ENCODE measurements at regions of chr1 and their contacts with region 1.

Region 1: DNA sequence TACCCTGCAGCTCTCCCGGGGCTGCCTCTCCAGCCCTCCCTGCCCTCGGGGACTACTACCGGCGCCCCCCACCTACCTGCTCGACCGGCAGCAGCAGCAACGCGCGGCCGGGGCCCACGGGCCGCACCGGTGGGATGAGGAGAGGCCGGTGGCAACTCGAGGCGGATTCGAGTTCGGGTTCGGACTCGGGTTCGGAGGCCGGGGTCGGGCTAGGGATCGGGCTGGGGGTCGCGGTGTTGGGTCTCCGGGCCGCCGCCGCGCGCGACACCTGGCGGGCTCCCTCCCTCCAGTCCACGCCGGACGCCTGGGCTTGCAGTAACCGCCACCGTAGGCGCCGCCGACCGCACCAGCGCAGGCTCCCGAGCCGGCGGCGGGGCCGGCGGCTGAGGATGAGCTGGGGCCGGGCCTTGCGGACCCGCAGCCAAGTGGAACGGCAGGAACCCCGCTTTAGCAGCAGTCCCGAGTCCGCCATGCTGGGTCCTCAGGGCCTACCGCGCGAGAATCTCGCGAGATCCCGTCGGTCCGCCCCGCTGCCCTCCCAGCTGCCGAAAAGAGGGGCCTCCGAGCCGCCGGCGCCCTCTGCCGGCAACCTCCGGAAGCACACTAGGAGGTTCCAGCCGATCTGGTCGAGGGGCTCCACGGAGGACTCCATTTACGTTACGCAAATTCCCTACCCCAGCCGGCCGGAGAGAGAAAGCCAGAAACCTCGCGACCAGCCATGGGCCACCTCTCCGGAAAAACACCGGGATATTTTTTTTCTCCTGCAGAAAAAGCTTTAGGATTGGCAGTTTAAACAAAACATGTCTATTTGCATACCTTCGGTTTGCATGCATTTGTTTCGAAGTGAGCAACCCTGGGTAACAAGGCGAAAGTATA is at the start of gene NOL9:
- DNase-seq: peak; percentile 95
- H3K27ac ChIP-seq: peak within 1 kb of the TSS; percentile 74
- CTCF ChIP-seq: peak; percentile 93

Region 2: DNA sequence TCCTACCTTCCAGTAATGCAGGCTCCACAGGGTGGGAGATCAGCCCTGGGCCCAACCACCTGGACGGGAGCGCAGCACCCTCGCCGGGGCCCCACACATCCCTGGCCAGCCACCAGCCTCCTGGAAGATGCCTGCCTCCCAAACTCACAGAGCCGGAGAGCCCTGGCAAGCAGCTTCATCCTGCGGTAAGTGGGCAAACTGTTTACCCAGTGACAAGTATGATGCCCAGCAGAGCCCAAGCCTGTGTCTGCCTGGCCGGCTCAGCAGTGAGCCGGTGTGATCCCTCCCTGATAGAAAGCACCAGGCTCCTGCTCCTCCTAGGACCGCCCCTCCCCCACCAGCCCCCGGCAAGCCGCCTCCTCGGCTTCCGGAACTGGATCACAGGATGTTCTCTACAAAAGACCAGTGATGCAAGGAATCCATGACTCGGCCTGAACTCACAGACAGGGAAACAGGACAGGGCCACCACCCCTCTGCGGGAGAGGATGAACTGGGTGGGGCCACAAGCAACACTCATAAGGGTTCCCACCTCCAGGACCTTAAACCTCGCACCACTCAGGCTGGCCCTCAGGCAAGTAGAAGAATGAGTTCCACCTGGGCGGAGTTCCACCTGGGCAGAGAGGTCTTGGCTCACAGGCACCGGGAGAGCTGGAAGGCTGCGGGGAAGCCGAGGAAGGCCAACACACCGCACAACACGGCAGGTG is 168.6 kb before region 1 on chr1:
- CTCF ChIA-PET with region 1: no interaction called
- POLR2A ChIA-PET with region 1: no interaction called
- DNase-seq: peak; percentile 97
- H3K27ac ChIP-seq: peak overlapping the region; percentile 99
- CTCF ChIP-seq: no peak

Region 3: DNA sequence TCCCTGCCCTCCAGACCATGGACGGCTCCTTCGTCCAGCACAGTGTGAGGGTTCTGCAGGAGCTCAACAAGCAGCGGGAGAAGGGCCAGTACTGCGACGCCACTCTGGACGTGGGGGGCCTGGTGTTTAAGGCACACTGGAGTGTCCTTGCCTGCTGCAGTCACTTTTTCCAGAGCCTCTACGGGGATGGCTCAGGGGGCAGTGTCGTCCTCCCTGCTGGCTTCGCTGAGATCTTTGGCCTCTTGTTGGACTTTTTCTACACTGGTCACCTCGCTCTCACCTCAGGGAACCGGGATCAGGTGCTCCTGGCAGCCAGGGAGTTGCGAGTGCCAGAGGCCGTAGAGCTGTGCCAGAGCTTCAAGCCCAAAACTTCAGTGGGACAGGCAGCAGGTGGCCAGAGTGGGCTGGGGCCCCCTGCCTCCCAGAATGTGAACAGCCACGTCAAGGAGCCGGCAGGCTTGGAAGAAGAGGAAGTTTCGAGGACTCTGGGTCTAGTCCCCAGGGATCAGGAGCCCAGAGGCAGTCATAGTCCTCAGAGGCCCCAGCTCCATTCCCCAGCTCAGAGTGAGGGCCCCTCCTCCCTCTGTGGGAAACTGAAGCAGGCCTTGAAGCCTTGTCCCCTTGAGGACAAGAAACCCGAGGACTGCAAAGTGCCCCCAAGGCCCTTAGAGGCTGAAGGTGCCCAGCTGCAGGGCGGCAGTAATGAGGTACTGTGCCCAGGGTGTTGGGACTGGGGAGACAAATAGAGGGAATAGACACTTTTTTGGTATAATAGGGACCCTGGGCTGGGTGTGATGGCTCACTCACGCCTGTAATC is 26.5 kb after region 1 on chr1:
- CTCF ChIA-PET with region 1: interaction called, 10 read pairs
- POLR2A ChIA-PET with region 1: interaction called, 3 read pairs
- DNase-seq: no peak
- H3K27ac ChIP-seq: peak overlapping the region; percentile 92
- CTCF ChIP-seq: no peak